MCF 10A (cell line): ENCODE measurements at regions of chr1 and their contacts with region 1.

Region 1: DNA sequence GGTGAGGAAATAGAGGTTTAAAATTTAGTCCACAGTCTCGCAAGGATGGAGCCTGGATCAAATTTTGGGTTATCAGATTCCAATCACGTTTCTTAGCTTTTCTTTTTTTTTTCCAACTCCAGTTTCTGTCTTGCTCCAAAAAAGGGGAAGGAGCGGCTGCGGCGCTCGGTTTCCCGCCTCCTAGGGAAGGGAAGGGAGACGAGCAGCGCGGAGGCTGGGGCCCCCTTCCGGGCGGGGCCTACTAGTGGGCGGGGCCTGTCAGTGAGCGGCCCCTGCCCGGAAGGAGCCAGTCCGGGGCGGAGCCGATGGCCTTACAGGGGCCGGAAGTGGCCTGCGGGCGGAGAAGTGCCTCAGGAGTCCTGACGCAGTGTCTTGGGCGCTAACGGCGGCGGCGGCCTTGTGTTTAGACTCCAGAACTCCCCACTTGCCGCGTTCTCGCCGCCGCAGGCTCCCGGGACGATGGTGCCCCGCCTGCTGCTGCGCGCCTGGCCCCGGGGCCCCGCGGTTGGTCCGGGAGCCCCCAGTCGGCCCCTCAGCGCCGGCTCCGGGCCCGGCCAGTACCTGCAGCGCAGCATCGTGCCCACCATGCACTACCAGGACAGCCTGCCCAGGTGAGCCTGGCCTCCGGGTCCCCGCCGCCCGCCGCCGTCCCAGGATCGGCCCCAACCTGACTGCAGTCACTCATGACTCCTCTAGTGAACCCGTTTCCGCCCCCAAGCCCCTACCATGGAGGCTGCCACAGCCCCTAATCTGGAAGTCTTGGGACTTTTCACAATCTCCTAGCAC is at the start of gene CPT2:
- DNase-seq: peak; percentile 91
- H3K4me3 Mint-ChIP-seq: peak within 1 kb of the TSS; percentile 94
- H3K27ac Mint-ChIP-seq: peak within 1 kb of the TSS; percentile 98
- H3K4me1 Mint-ChIP-seq: peaks cover 24% of the 10 kb centered on the region
- H3K27me3 Mint-ChIP-seq: no peaks in the 10 kb centered on the region
- CTCF ChIP-seq: no peak
- total RNA-seq, gene CPT2: 17.3 and 19.6 TPM in 2 replicates

Region 2: DNA sequence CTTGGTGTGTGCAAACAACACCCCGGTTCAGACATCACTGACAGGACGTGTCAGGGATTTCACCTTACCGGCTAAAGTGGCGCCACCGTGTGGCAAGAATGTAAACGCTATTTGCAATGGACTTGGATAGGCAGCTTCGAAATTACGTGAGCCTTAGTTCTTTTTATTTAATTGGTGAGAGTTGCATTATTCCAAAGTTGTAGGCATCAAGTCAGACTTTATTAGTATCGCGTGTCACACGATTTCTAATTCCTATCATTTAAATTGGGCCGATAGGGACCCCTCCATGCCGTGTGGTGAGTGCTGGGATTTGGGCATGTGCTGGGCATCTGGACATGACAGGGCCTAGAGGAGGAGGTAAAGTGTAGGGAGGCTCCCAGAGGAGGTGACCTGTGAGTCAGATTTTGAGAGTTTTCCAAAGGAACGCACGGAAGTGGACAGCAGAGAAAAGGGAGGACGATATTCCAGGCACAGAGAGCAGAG is 14.5 kb before region 1 on chr1:
- CTCF ChIA-PET with region 1: interaction called, 17 read pairs
- POLR2A ChIA-PET with region 1: interaction called, 21 read pairs
- intact Hi-C with region 1: no loop called
- DNase-seq: peak; percentile 84
- H3K4me3 Mint-ChIP-seq: no peak overlapping the region
- H3K27ac Mint-ChIP-seq: no peak overlapping the region
- H3K4me1 Mint-ChIP-seq: no peaks in the 10 kb centered on the region
- H3K27me3 Mint-ChIP-seq: no peaks in the 10 kb centered on the region
- CTCF ChIP-seq: peak; percentile 66

Region 3: DNA sequence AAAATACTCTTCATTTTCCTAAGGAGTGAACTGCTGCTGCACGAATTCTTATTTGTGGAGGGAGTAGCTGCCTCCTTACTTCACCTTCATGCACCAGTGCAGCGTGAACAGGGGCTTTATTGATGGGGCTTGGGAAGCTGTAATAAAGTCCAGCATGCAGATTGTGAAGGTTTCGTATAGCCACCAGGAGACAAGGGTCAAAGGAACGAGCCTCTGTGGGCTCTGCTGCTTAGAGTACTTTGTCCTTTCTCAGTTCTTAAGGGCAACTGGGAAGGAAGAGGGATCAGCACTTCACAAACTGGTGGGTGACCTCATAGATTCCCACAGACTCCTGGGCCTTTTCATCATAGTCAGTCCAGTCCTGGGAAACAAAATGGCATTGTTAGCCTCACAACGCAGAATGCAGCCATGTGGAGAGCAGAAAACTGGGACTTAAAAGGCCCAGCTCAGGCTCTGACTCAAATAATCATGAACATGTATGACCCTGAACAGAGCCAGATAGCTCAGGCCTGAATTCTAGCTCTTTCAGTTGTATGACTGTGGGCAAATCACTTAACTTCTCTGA is 17.8 kb after region 1 on chr1:
- CTCF ChIA-PET with region 1: no interaction called
- POLR2A ChIA-PET with region 1: interaction called, 49 read pairs
- intact Hi-C with region 1: no loop called
- DNase-seq: no peak
- H3K4me3 Mint-ChIP-seq: no peak overlapping the region
- H3K27ac Mint-ChIP-seq: no peak overlapping the region
- H3K4me1 Mint-ChIP-seq: peaks cover 8% of the 10 kb centered on the region
- H3K27me3 Mint-ChIP-seq: no peaks in the 10 kb centered on the region
- CTCF ChIP-seq: no peak

Region 4: DNA sequence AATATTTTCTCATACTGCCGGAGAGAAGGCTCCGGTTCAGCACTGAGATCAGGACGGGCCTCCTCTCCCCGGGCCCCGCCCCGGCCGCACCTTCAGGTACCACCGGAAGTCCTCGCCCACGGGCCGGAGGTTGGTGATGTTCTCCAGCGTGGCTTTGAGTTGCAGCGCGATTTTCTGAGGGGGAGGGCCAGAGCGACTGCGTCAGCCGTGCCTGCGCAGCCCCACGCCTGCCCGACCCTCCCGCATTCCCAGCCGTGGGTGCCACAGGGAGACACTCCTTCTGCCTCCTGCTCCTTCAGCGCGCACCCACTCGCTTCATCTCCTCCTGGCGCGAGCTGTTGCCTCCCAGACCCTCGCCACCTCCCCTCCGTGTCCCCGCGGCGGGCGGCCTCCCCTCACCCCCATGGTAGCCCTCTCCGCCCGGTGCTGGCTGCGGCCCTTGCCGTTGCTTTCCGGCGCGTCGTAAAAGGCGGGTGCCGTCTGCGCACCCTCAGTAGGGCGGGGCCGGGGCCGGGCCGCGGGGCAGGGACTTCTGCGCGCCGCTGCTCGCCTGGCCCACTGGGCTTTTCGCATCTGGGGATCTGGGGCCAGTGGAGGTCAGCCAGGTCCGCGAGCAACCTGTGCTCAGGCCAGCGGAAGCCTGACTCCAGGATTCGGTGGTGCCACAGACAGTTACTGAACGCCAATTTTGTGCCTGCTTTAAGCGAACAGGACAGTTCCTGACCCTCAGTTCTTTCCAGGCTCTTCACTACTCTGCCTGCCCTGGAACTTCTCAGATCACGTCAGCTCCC is 23.7 kb after region 1 on chr1 and contains the start of gene CZIB:
- CTCF ChIA-PET with region 1: no interaction called
- POLR2A ChIA-PET with region 1: interaction called, 49 read pairs
- intact Hi-C with region 1: no loop called
- DNase-seq: peak; percentile 93
- H3K4me3 Mint-ChIP-seq: peak within 1 kb of the TSS; percentile 94
- H3K27ac Mint-ChIP-seq: peak within 1 kb of the TSS; percentile 99
- H3K4me1 Mint-ChIP-seq: peaks cover 8% of the 10 kb centered on the region
- H3K27me3 Mint-ChIP-seq: no peaks in the 10 kb centered on the region
- CTCF ChIP-seq: no peak
- total RNA-seq, gene CZIB: 37.2 and 45.0 TPM in 2 replicates

Region 5: DNA sequence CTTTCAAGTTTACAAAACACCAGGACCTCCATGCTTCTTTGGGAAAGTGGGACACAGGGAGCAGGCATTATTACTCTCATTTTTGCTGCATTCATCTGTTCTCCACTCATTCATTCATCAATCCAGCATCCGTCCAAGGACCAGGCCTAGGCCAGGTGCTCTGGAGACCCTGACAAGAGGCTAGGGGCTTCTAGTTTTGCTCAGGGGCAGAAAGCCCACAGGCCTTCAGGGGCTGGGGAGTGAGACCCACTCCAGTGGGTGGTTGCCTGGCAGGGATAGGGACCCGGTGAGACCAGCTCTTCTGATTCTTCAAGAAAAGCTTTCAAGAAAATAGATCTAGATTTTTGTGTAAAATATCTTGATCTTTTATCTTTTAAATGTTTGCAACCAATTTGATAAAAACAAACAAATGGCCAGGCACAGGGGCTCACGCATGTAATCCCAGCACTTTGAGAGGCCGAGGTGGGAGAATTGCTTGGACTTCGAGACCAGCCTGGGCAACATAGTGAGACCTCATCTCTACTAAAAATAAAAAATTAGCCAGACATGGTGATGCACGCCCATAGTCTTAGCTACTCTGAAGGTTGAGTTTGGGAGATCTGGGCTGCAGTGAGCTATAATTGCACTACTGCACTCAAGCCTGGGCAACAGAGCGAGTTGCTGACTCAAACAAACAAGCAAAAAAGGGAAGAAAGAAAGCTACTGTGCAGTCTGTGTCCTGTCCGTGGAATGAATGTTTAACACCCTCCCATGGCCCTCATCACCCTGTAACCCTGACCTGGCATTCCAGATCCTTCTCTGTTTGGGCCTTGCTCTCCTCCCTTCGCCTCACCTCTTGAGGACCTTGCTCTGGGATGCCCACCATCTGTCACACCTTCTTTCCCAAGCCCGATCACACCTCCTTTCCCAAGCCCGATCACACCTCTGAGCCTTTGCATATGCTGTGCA is 148.5 kb after region 1 on chr1:
- CTCF ChIA-PET with region 1: no interaction called
- POLR2A ChIA-PET with region 1: no interaction called
- intact Hi-C with region 1: no loop called
- DNase-seq: no peak
- H3K4me3 Mint-ChIP-seq: no peak overlapping the region
- H3K27ac Mint-ChIP-seq: no peak overlapping the region
- H3K4me1 Mint-ChIP-seq: no peaks in the 10 kb centered on the region
- H3K27me3 Mint-ChIP-seq: no peaks in the 10 kb centered on the region
- CTCF ChIP-seq: no peak